Activated T-helper 1 cell treated with anti-CD3 and anti-CD28 coated beads, Interleukin-12 subunit alpha, Interleukin-12 subunit beta, Interleukin-2, Interleukin-4 antibody, amounts not matched to agents 30 ng/mL and 10 ng/mL and 1 ng/mL, durations not matched to agents 14 hours and 24 hours and 36 hours (primary cell): ENCODE measurements at regions of chr7 and their contacts with region 1.

Region 1: DNA sequence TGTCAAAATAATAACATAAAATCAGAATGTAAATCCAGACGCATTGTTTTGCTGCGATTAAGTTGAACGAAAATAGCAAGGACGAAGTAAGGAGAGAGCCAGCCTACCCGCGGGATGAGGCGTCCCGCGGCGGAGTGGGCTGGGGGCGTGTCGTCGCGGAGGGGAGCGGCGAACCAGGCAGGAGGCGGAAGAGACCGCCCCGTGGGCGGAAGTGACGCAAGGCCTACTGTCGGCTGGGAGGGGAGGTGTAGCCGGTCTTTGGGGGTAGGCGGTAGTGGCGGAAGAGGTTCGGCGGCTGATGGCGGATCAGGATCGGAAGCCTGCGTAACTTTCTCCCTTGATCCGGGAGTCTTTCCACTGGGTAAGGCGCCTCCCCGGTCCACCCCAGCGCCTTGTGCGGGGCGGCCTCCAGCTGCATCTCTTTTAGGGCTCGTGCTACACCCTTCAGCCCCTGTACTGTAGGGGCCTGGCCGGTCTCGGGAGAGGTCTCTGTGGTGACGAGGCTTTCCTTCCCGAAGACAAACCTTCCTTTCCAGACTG is at the start of gene TAX1BP1:
- DNase-seq: peak; percentile 93
- H3K4me3 Mint-ChIP-seq: peak within 1 kb of the TSS; percentile 92
- H3K27ac Mint-ChIP-seq: peak within 1 kb of the TSS; percentile 98
- H3K4me1 Mint-ChIP-seq: peaks cover 41% of the 10 kb centered on the region
- H3K27me3 Mint-ChIP-seq: peaks cover 2% of the 10 kb centered on the region
- total RNA-seq, gene TAX1BP1: 88.6 and 90.9 TPM in 2 replicates

Region 2: DNA sequence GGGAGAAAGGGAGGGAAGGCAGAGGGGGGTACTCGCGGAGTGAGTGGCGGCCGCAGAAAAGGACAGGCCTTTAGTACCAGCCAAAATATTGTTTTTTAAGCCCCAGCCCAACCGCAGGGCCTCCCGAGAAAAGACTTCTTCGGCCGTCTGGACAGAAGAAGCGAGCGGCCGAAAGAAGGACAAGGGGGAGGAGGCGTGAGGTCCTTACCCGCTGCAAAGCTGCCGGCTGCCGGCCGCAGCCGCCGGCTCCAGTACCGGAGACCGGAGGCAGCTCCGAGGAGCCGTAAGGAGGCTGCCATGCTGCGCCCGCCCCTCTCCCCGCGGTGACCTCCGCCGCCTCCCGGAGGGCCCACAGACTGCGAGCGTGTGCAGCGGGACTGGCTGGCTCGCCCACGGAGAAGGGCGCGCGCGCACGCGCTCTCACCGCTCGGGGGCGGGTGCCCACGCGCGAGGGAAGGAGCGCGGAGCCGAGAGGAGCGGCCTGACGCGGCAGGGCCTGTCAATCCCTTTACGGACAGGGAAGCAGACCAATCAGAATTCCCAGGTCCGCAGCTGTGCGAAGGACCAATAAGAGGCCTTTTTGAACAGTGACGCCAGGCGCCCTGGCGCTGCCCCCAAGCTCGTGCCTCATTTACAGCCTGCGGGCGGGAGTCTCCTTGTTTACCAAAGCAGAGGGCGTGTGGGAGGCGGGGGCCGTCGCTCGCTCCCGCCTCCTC is 77.3 kb before region 1 on chr7 and contains the start of gene HIBADH:
- intact Hi-C with region 1: loop called (anchors 1 kb)
- DNase-seq: peak; percentile 96
- H3K4me3 Mint-ChIP-seq: peak within 1 kb of the TSS; percentile 86
- H3K27ac Mint-ChIP-seq: peak within 1 kb of the TSS; percentile 81
- H3K4me1 Mint-ChIP-seq: peaks cover 30% of the 10 kb centered on the region
- H3K27me3 Mint-ChIP-seq: no peaks in the 10 kb centered on the region
- total RNA-seq, gene HIBADH: 21.0 and 21.2 TPM in 2 replicates

Region 3: GRCh38 chr7:27689591-27690164 is 50.3 kb before region 1 on chr7:
- intact Hi-C with region 1: no loop called
- DNase-seq: no peak
- H3K4me3 Mint-ChIP-seq: no peak overlapping the region
- H3K27ac Mint-ChIP-seq: no peak overlapping the region
- H3K4me1 Mint-ChIP-seq: no peaks in the 10 kb centered on the region
- H3K27me3 Mint-ChIP-seq: peaks cover 6% of the 10 kb centered on the region

Region 4: DNA sequence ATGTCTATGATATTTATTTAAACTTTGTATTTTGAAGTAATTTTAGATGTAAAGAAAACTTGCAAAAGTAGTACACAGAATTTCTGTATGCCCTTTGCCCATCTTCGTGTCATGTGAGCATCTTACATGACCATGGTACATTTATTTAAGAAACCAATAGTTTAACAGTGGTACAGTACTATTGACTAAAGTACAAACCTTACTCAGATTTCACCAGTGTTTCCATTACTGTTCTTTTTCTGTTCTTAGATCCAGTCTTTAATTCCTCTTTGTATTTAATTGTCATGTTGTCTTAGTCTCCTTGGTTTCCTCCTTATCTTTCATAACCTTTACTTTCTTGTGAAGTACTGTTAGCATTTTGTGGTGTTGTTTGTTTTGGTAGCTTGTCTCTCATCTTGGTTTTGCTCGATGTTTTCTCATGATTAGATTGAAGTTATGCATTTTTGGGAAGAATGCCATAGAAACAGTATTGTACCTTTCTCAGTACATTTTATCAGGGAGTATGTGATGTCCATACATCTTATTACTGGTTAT is 24.1 kb after region 1 on chr7:
- intact Hi-C with region 1: loop called (anchors 2 kb)
- DNase-seq: no peak
- H3K4me3 Mint-ChIP-seq: no peak overlapping the region
- H3K27ac Mint-ChIP-seq: no peak overlapping the region
- H3K4me1 Mint-ChIP-seq: peaks cover 13% of the 10 kb centered on the region
- H3K27me3 Mint-ChIP-seq: no peaks in the 10 kb centered on the region